ENCODE measurements at regions of chr2 and their contacts with region 1.

Region 1: GRCh38 chr2:43773876-43774613 is at the start of gene DYNC2LI1:
- DNase-seq: peak; percentile 96
- H3K4me3 ChIP-seq: peak within 1 kb of the TSS; percentile 63 to 83 (median 72)
- H3K27ac ChIP-seq: peak within 1 kb of the TSS; percentile 82 to 89 (median 86)
- H3K4me1 ChIP-seq: peaks cover 0 to 7% (median 0%) of the 10 kb centered on the region in 4 donors
- H3K27me3 ChIP-seq: no peaks in the 10 kb centered on the region
- CTCF ChIP-seq: no peak
- EP300 ChIP-seq: no peak
- POLR2A ChIP-seq: peak in 1 of 2 donors; percentile 25
- total RNA-seq, gene DYNC2LI1: 15.1 to 32.1 (median 25.1) TPM

Region 2: DNA sequence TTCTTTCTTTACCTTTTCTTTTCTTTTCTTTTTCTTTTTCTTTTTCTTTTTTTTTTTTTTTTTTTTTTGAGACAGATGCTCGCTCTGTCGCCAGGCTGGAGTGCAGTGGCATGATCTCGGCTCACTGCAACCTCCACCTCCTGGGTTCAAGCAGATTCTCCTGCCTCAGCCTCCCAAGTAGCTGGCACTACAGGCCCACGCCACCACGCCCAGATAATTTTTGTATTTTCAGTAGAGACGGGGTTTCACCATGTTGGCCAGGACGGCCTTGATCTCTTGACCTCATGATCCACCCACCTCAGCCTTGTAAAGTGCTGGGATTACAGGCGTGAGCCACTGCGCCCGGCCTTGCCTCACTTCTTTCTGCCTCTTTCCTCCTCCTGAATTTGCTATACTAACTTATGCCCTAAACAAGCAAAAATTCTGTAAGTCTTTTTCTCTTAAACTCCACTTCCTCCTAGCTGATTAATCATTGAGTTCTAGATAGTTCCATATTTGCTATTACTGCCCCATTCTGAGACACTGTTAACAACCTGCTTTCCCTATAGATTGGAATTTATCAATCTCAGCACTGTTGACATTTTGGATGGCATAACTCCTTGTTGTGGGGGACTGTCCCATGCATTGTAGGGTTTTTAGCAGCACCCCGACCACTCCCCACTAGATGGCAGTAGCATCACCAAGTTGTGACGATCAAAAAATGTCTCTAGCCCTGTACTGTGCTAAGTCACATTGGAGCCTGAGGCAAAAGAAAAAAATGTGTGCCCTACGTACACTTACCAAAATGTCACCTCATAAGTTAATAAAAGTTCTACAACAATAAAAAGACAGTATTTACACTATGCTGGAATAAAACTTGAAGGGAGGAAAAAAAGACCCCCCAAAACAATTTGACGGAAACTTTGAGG is 161.8 kb before region 1 on chr2:
- intact Hi-C with region 1: loop called (anchors 5 kb)
- DNase-seq: peak; percentile 80
- H3K4me3 ChIP-seq: no peak overlapping the region
- H3K27ac ChIP-seq: peak overlapping the region in 3 of 4 donors; percentile 11 to 48 (median 18)
- H3K4me1 ChIP-seq: peaks cover 0 to 4% (median 0%) of the 10 kb centered on the region in 4 donors
- H3K27me3 ChIP-seq: no peaks in the 10 kb centered on the region
- CTCF ChIP-seq: peak; percentile 59 to 72 (median 69)
- EP300 ChIP-seq: no peak
- POLR2A ChIP-seq: no peak

Region 3: GRCh38 chr2:43927442-43927841 is 153.4 kb after region 1 on chr2:
- intact Hi-C with region 1: no loop called
- DNase-seq: no peak
- H3K4me3 ChIP-seq: no peak overlapping the region
- H3K27ac ChIP-seq: no peak overlapping the region
- H3K4me1 ChIP-seq: no peaks in the 10 kb centered on the region
- H3K27me3 ChIP-seq: no peaks in the 10 kb centered on the region
- CTCF ChIP-seq: no peak
- EP300 ChIP-seq: no peak
- POLR2A ChIP-seq: no peak